Right ventricle myocardium superior (tissue), 1 donor: ENCODE measurements at regions of chr2 and their contacts with region 1.

Region 1: GRCh38 chr2:127996160-127996559 is 31.7 kb downstream of the SAP130 start:
- DNase-seq: no peak
- ATAC-seq: no peak

Region 2: DNA sequence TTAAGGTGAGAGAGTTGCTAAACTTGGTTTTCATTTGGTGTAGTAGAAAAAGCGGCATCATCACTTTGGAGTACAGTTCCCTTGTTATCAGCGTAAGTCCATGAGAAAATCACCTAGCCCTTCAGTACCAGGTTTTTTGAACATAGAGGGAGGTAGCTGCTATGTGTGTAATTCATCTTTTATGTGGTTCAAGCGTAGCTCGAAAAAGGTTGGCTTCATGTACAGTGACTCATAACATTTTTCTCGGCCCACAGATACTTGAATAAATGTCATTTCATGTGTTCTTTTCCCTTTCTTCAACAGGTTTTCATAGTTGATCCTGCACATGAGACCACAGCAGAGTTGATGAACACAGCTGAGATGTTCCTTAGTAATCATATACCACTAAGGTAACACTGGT is 138.4 kb after region 1 on chr2:
- intact Hi-C with region 1: loop called (anchors 10 kb)
- DNase-seq: no peak
- ATAC-seq: no peak